MCF 10A (cell line): ENCODE measurements at regions of chr2 and their contacts with region 1.

Region 1: GRCh38 chr2:62654423-62654791 is 51.1 kb upstream of the EHBP1 start:
- DNase-seq: peak; percentile 50
- H3K4me3 Mint-ChIP-seq: peak overlapping the region; percentile 22
- H3K27ac Mint-ChIP-seq: peak overlapping the region; percentile 79
- H3K4me1 Mint-ChIP-seq: peaks cover 23% of the 10 kb centered on the region
- H3K27me3 Mint-ChIP-seq: no peaks in the 10 kb centered on the region
- CTCF ChIP-seq: no peak

Region 2: DNA sequence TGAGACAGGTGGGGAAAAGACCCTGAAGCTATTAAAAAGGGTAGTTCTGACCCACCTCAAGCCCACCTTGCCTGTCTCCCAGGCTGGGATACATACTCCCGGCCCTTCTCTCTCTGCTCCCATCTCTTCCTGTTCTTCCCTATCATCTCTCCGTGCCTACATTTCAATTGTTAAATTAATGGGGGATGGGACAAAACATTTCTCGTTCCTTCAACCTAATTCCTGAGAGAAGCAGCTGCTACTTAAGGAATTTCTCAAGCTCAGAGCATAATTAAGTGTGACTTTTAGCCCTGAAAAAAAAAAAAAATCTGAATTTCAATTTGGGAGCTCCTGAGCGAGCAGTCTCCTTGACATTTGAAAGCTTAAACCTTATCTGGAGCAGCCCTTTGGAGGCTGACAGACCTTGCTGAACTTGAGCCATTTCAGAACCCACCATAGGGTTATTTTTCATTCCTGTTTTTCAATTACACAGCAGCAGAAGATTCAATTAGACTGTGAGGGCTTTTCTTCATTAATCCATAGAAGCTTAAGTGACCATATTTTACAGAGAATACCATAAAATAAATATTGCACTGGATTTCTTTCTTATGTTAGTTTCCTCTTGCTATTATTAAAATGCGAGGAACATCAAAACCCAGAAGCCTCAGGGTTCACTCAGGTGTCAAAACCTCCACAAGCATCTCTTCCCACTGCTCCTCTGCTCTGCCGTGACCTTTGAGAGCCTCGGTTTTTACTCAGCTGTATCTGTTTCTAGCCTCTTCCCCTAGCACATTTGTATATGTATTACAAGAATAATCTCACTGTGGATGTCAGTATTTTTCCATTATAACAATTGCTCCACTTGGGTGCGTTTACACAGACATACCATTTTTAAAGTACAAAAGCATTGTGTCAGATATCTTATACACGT is 332.8 kb before region 1 on chr2:
- CTCF ChIA-PET with region 1: no interaction called
- POLR2A ChIA-PET with region 1: no interaction called
- intact Hi-C with region 1: no loop called
- DNase-seq: no peak
- H3K4me3 Mint-ChIP-seq: no peak overlapping the region
- H3K27ac Mint-ChIP-seq: no peak overlapping the region
- H3K4me1 Mint-ChIP-seq: no peaks in the 10 kb centered on the region
- H3K27me3 Mint-ChIP-seq: no peaks in the 10 kb centered on the region
- CTCF ChIP-seq: no peak

Region 3: DNA sequence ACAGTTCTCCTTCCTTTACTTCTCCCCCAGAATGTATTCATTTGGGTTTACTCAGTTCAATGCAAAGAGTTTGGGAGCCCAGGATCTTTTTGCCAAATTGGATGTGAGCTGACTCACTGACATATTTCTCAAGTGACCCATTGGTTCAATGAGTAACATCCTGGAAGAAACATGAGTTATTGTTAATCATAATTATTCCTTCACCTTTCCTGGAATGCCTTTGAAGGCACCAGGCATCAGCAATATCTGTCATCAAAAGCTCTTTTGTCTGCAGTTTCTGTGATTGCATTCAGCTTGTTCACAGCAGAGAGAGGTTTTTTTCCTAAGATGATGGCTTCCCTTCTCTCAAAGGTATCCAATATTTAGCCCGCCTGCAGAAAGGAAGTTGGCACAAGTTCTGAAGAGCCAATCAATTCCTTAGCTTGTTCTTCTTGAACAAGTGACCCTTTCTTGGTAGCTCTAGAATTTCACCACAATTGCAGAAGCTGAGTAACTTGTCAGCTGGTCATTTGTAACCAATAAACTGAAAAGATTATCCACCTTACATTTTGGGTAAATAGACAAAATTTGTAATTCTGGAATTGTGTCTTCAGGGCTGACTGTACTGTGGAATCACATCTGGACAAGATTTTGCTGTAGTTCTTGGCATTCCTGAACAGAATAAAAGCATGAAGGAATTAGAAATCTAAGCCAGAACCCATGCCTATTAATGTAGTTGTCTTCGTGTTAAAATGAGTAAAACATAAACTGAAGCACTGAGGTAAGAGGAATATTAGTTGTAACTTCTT is 76.2 kb before region 1 on chr2:
- CTCF ChIA-PET with region 1: no interaction called
- POLR2A ChIA-PET with region 1: interaction called, 15 read pairs
- intact Hi-C with region 1: no loop called
- DNase-seq: peak; percentile 94
- H3K4me3 Mint-ChIP-seq: peak overlapping the region; percentile 10
- H3K27ac Mint-ChIP-seq: peak overlapping the region; percentile 90
- H3K4me1 Mint-ChIP-seq: peaks cover 19% of the 10 kb centered on the region
- H3K27me3 Mint-ChIP-seq: no peaks in the 10 kb centered on the region
- CTCF ChIP-seq: no peak

Region 4: DNA sequence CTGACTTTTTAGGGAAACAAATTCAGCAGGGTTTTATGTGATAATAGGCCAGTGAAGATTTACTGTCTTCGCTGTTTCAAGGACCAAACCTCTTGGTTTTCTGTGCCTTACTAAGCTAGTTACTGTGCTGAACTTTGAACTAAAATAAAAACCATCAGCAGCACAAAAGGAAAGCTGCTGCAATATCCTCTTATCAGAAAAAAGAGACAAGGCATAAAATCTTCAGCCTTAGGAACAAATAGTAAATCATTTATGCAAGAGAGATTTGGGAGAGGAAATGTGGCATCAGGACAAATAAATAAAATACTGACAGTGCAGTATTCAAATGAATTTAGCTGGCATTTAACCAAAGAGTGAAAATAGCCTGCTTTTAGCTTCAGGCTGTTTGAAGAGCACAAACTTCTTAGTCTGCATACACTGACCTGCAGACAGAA is 13.0 kb before region 1 on chr2:
- CTCF ChIA-PET with region 1: no interaction called
- POLR2A ChIA-PET with region 1: interaction called, 11 read pairs
- intact Hi-C with region 1: no loop called
- DNase-seq: no peak
- H3K4me3 Mint-ChIP-seq: no peak overlapping the region
- H3K27ac Mint-ChIP-seq: no peak overlapping the region
- H3K4me1 Mint-ChIP-seq: peaks cover 16% of the 10 kb centered on the region
- H3K27me3 Mint-ChIP-seq: no peaks in the 10 kb centered on the region
- CTCF ChIP-seq: no peak

Region 5: GRCh38 chr2:62814123-62814522 is 159.7 kb after region 1 on chr2:
- CTCF ChIA-PET with region 1: no interaction called
- POLR2A ChIA-PET with region 1: no interaction called
- intact Hi-C with region 1: no loop called
- DNase-seq: peak; percentile 61
- H3K4me3 Mint-ChIP-seq: no peak overlapping the region
- H3K27ac Mint-ChIP-seq: no peak overlapping the region
- H3K4me1 Mint-ChIP-seq: peaks cover 15% of the 10 kb centered on the region
- H3K27me3 Mint-ChIP-seq: no peaks in the 10 kb centered on the region
- CTCF ChIP-seq: no peak